ENCODE measurements at regions of chr5 and their contacts with region 1.

Region 1: GRCh38 chr5:160467555-160468362 is 46.1 kb downstream of the PTTG1 start:
- DNase-seq: peak; percentile 89
- ATAC-seq: peak; percentile 85
- H3K4me3 Mint-ChIP-seq: peak overlapping the region; percentile 88
- H3K27ac Mint-ChIP-seq: peak overlapping the region; percentile 99
- H3K4me1 Mint-ChIP-seq: peaks cover 76% of the 10 kb centered on the region
- H3K27me3 Mint-ChIP-seq: no peaks in the 10 kb centered on the region

Region 2: GRCh38 chr5:160008877-160009590 is 458.7 kb before region 1 on chr5 and contains the start of gene TTC1:
- CTCF ChIA-PET with region 1: no interaction called
- POLR2A ChIA-PET with region 1: no interaction called
- intact Hi-C with region 1: loop called in 1 of 2 experiments (anchors 2 kb)
- DNase-seq: peak; percentile 95
- ATAC-seq: peak; percentile 98
- H3K4me3 Mint-ChIP-seq: peak within 1 kb of the TSS; percentile 92
- H3K27ac Mint-ChIP-seq: peak within 1 kb of the TSS; percentile 96
- H3K4me1 Mint-ChIP-seq: peaks cover 26% of the 10 kb centered on the region
- H3K27me3 Mint-ChIP-seq: no peaks in the 10 kb centered on the region
- total RNA-seq, gene TTC1: 60.6 to 63.1 TPM

Region 3: GRCh38 chr5:160418561-160419457 is 49.0 kb before region 1 on chr5 and contains the start of gene SLU7:
- CTCF ChIA-PET with region 1: interaction called, 5 read pairs
- POLR2A ChIA-PET with region 1: interaction called, 3 read pairs
- intact Hi-C with region 1: loop called (anchors 1 kb)
- DNase-seq: peak; percentile 96
- ATAC-seq: peak; percentile 80
- H3K4me3 Mint-ChIP-seq: peak within 1 kb of the TSS; percentile 96
- H3K27ac Mint-ChIP-seq: peak within 1 kb of the TSS; percentile 99
- H3K4me1 Mint-ChIP-seq: peaks cover 57% of the 10 kb centered on the region
- H3K27me3 Mint-ChIP-seq: no peaks in the 10 kb centered on the region
- total RNA-seq, gene SLU7: 41.1 to 53.0 TPM

Region 4: GRCh38 chr5:160486573-160486972 is 18.8 kb after region 1 on chr5:
- CTCF ChIA-PET with region 1: interaction called, 3 read pairs
- POLR2A ChIA-PET with region 1: no interaction called
- intact Hi-C with region 1: loop called in 1 of 2 experiments (anchors 1 kb)
- DNase-seq: peak; percentile 48
- ATAC-seq: peak; percentile 80
- H3K4me3 Mint-ChIP-seq: no peak overlapping the region
- H3K27ac Mint-ChIP-seq: peak overlapping the region; percentile 56
- H3K4me1 Mint-ChIP-seq: peaks cover 33% of the 10 kb centered on the region
- H3K27me3 Mint-ChIP-seq: no peaks in the 10 kb centered on the region

Region 5: DNA sequence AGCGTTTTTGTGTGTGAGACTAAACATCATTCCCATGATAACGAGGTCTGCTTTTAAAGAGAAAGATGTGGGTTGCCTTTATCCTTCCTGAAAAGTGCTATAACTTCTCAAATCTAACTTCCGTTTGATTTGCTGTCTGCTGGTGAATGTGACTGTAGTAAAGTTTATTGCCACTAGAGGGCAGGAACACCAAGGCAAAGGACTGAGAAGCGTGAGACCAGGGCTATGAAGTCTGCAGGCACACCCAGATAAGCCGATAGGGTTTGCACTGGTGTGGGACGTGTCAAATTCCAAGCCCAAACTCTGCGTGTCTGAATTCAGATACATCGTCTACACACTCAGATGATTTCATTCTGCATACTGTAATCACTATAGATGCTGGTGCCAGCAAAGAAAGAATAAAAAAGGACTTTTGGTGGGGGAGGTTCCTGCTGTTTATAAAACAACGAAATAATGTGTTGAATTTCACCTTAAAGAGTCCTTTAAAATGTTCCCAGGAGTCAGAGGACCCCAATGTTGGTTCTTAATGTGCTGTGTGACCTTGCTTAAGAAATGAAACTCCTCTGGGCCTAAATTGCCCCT is 41.1 kb after region 1 on chr5:
- CTCF ChIA-PET with region 1: interaction called, 20 read pairs
- POLR2A ChIA-PET with region 1: interaction called, 5 read pairs
- intact Hi-C with region 1: loop called (anchors 1 to 2 kb)
- DNase-seq: peak; percentile 76
- ATAC-seq: peak; percentile 73
- H3K4me3 Mint-ChIP-seq: no peak overlapping the region
- H3K27ac Mint-ChIP-seq: peak overlapping the region; percentile 82
- H3K4me1 Mint-ChIP-seq: peaks cover 45% of the 10 kb centered on the region
- H3K27me3 Mint-ChIP-seq: peaks cover 6% of the 10 kb centered on the region

Measured in activated CD4-positive, alpha-beta T cell treated with anti-CD3 and anti-CD28 coated beads for 36 hours (primary cell).